Endothelial cell of umbilical vein (primary cell): ENCODE measurements at regions of chrX and their contacts with region 1.

Region 1: GRCh38 chrX:71181910-71182799 is 37.5 kb downstream of the NLGN3 start:
- DNase-seq: peak; percentile 95
- H3K4me3 ChIP-seq: peak overlapping the region in 2 of 3 experiments; percentile 33 to 55
- H3K27ac ChIP-seq: peak overlapping the region; percentile 63
- H3K4me1 ChIP-seq: peaks cover 7% of the 10 kb centered on the region
- H3K27me3 ChIP-seq: no peaks in the 10 kb centered on the region
- CTCF ChIP-seq: no peak
- POLR2A ChIP-seq: peak; percentile 68

Region 2: GRCh38 chrX:70454441-70455365 is 727.5 kb before region 1 on chrX:
- CTCF ChIA-PET with region 1: no interaction called
- POLR2A ChIA-PET with region 1: no interaction called
- dilution Hi-C with region 1: no loop called
- intact Hi-C with region 1: loop called (anchors 1 kb)
- DNase-seq: peak; percentile 49
- H3K4me3 ChIP-seq: peak overlapping the region; percentile 14 to 43 (median 31)
- H3K27ac ChIP-seq: no peak overlapping the region
- H3K4me1 ChIP-seq: peaks cover 6% of the 10 kb centered on the region
- H3K27me3 ChIP-seq: no peaks in the 10 kb centered on the region
- CTCF ChIP-seq: peak; percentile 73 to 82
- POLR2A ChIP-seq: no peak

Region 3: DNA sequence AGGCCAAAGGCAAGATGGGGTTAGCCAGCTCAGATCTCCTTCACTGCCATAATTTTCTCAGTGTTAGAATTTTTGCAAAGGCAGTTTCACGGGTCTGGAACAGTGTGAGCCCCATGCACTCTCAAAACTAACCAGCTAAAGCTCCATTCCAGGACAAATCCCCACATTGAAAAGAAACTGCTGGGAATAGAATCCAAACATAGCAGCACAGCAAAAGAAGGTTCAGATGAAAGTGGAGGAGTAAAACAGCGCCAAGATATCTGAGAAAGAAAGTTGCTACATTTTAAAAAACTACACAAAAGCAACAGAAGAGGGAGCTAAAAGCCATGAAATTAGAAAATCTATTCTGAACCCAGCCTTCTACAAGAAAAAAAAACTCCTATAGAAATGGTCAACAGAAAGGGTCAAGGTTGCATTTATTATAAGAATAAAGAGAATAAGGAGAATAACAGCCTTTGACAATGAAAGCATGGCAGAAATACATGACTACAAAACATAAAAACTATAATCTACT is 211.6 kb before region 1 on chrX:
- CTCF ChIA-PET with region 1: interaction called, 18 read pairs
- POLR2A ChIA-PET with region 1: interaction called, 3 read pairs
- dilution Hi-C with region 1: no loop called
- intact Hi-C with region 1: loop called (anchors 1 kb)
- DNase-seq: peak; percentile 18
- H3K4me3 ChIP-seq: no peak overlapping the region
- H3K27ac ChIP-seq: no peak overlapping the region
- H3K4me1 ChIP-seq: no peaks in the 10 kb centered on the region
- H3K27me3 ChIP-seq: no peaks in the 10 kb centered on the region
- CTCF ChIP-seq: no peak
- POLR2A ChIP-seq: no peak

Region 4: DNA sequence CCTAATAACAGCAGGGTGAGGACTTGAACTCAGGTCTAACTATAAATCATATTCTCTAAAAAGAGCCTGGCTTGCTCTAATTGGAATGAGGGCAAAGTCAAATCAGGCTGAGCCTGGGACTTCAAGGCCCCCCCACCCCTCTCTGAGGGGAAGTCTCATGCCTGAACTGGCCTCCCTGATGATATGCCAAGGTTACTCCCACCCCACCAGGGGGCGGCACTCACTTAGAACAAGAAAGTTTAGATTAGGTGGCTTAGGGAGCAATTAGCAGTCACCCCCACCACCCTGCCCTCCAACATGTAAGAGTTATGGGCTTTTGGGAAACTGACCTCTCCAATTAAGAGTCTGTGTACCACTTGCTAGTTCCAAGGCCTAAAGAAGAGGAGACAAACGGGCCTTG is 83.9 kb before region 1 on chrX:
- CTCF ChIA-PET with region 1: interaction called, 3 read pairs
- POLR2A ChIA-PET with region 1: no interaction called
- dilution Hi-C with region 1: no loop called
- intact Hi-C with region 1: loop called (anchors 2 kb)
- DNase-seq: peak; percentile 53
- H3K4me3 ChIP-seq: no peak overlapping the region
- H3K27ac ChIP-seq: no peak overlapping the region
- H3K4me1 ChIP-seq: peaks cover 6% of the 10 kb centered on the region
- H3K27me3 ChIP-seq: peaks cover 0 to 1% of the 10 kb centered on the region in 2 experiments
- CTCF ChIP-seq: peak; percentile 41 to 49
- POLR2A ChIP-seq: no peak

Region 5: GRCh38 chrX:71254092-71254941 is 72.2 kb after region 1 on chrX and contains the start of gene ZMYM3:
- CTCF ChIA-PET with region 1: no interaction called
- POLR2A ChIA-PET with region 1: no interaction called
- dilution Hi-C with region 1: no loop called
- intact Hi-C with region 1: loop called (anchors 1 kb)
- DNase-seq: peak; percentile 80
- H3K4me3 ChIP-seq: peak within 1 kb of the TSS; percentile 80 to 96 (median 94)
- H3K27ac ChIP-seq: peak within 1 kb of the TSS; percentile 51
- H3K4me1 ChIP-seq: peaks cover 8% of the 10 kb centered on the region
- H3K27me3 ChIP-seq: no peaks in the 10 kb centered on the region
- CTCF ChIP-seq: no peak
- POLR2A ChIP-seq: peak; percentile 24
- total RNA-seq, gene ZMYM3: 32.9 and 33.1 TPM in 2 replicates

Region 6: DNA sequence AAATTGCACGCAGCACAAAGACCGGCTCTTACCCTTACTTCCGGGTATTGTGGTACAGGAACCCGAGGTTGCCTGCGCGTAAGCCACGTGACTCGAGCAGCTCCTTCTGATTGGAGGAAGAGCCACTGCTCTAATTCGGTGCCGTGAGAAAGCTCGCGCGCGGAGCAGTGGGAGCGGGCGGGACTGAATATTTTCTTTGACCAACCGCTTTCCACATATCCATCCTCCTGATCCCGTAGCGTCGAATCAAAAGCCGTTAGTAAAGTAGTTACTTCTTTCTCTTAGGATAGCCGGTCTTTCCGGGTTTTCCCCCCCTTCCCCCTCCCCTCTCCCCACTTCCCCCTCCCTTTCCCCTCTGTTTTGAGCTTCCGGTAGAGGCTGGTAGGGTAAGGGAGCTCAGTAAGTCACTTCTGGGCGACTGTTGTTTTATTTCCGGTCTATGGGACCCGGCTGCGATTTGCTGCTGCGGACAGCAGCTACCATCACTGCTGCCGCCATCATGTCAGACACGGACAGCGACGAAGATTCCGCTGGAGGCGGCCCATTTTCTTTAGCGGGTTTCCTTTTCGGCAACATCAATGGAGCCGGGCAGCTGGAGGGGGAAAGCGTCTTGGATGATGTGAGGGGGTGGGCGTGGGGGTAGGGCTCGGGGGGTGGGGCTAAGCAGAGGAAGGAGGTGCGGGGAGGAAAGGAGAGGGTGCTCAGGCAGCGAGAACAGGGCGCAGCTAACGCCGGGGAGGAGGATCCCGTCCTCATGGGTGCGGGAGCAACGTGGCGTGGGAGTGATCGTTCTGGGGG is 183.9 kb after region 1 on chrX and contains the start of gene TAF1:
- CTCF ChIA-PET with region 1: no interaction called
- POLR2A ChIA-PET with region 1: interaction called, 3 read pairs
- dilution Hi-C with region 1: no loop called
- intact Hi-C with region 1: loop called (anchors 5 kb)
- DNase-seq: peak; percentile 98
- H3K4me3 ChIP-seq: peak within 1 kb of the TSS; percentile 54 to 91 (median 68)
- H3K27ac ChIP-seq: peak within 1 kb of the TSS; percentile 99
- H3K4me1 ChIP-seq: peaks cover 15% of the 10 kb centered on the region
- H3K27me3 ChIP-seq: no peaks in the 10 kb centered on the region
- CTCF ChIP-seq: no peak
- POLR2A ChIP-seq: peak; percentile 70
- total RNA-seq, gene TAF1: 39.0 and 41.0 TPM in 2 replicates